AG04450 (cell line): ENCODE measurements at regions of chrX and their contacts with region 1.

Region 1: GRCh38 chrX:130079824-130080406 is 30.4 kb downstream of the ELF4 start:
- DNase-seq: peak; percentile 42
- H3K4me3 ChIP-seq: no peak overlapping the region
- H3K27ac ChIP-seq: no peak overlapping the region
- H3K27me3 ChIP-seq: no peaks in the 10 kb centered on the region
- CTCF ChIP-seq: peak; percentile 70

Region 2: DNA sequence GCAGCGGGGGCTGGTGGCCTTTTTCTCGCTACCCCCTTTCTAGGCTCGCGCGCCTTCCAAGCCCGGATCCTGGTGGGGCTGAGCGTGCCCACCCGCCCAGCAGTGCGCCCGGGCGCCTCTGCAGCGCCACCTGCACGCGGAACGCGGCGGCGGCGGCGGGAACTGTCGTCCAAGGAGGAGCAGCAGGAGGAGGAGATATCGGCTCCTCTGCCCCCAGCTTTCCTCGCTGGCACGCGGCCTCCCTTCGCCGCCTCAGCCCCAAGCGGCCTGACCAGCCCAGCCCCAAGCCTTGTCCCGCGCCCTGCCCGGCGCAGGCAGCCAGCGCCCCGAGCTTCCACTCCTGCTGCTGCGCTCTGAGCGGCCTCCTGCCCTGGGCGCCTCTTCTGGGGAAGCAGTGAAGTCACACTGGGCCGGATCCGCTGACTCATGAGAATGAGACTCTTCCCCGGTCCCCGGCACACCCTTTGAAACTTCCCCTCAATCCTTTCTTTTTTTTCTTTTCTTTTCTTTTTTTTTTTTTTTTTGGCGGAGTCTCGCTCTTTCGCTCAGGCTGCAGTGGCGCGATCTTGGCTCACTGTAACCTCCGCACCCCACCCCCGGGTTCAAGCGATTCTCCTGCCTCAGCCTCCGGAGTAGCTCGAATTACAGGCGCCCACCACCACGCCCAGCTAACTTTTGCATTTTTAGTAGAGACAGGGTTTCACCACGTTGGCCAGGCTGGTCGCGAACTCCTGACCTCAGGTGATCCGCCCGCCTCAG is 41.0 kb after region 1 on chrX:
- CTCF ChIA-PET with region 1: interaction called, 18 read pairs
- POLR2A ChIA-PET with region 1: interaction called, 3 read pairs
- DNase-seq: no peak
- H3K4me3 ChIP-seq: peak overlapping the region; percentile 45
- H3K27ac ChIP-seq: peak overlapping the region; percentile 21
- H3K27me3 ChIP-seq: no peaks in the 10 kb centered on the region
- CTCF ChIP-seq: peak; percentile 53

Region 3: DNA sequence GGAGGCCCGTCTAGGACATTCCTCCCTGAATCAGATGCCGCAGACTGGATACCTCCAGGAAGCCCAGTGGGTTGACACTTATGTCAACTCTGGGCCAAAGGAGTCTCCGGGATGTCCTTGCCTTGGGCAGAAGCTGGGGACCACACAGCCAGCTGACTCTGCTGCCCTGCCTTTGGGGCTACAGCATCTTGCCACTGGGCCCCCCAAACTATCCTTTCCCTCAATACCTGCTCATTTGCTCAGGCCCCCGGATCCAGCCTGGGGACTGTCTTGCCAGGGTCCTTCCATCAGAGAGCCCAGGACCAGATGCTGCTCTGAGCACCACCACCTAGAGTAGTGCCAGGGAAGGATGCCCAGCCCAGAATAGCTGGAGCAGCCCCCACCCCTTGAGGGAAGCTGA is 110.9 kb after region 1 on chrX:
- CTCF ChIA-PET with region 1: interaction called, 53 read pairs
- POLR2A ChIA-PET with region 1: no interaction called
- DNase-seq: no peak
- H3K4me3 ChIP-seq: no peak overlapping the region
- H3K27ac ChIP-seq: no peak overlapping the region
- H3K27me3 ChIP-seq: no peaks in the 10 kb centered on the region
- CTCF ChIP-seq: no peak

Region 4: DNA sequence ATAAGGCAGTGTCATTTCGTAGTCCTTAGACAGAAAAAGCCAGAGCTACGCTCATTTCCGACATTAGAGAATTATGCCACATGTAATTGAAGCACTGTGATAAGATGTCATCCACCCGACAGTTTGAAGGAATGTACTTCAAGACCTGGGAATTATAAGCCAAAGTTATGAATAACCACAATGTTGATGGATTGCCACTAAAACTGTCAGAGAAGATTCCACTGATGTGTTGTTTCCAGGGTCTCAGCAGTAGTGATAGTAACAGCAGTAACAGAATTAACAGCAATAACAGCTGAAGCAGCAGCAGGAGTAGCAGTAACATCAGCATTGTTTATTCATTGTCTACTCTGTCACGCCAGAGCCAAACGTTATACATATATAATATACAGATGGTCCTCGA is 116.6 kb after region 1 on chrX:
- CTCF ChIA-PET with region 1: interaction called, 53 read pairs
- POLR2A ChIA-PET with region 1: no interaction called
- DNase-seq: no peak
- H3K4me3 ChIP-seq: no peak overlapping the region
- H3K27ac ChIP-seq: no peak overlapping the region
- H3K27me3 ChIP-seq: no peaks in the 10 kb centered on the region
- CTCF ChIP-seq: no peak